ENCODE measurements at regions of chr3 and their contacts with region 1.

Region 1: DNA sequence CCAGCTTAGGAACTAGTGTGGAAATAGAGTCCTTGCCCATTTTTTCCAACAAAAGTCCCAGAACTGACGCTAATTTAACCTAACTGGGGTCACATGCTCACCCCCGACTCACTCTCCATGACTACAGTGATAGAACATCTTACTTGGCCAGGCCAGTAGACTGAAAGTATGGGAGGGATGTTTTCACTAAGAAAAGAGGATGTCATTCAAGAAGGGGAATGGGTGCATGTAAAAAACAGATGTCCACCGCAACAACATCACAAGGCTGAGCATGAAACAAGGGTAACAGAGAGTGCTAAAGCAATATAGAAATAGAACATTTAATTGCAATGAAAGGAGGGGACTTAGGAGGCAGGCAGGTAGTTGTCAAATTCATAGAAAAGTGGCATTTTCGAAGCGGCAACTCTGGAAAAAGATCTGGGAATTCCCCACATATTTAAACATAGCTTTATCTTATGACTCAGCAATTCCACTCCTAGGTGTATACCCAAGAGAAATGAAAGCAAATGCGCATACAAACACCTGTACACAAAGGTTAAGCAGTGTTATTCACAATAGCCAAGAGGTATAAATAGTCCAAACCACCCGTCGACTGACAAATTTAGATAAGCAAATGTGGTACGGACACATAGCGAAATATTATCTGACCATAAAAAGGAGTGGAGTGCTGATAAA is 41.1 kb upstream of the UBE2E2 start:
- DNase-seq: peak; percentile 17
- H3K4me3 ChIP-seq: no peak overlapping the region
- H3K27ac ChIP-seq: no peak overlapping the region
- H3K4me1 ChIP-seq: peaks cover 8% of the 10 kb centered on the region
- H3K27me3 ChIP-seq: no peaks in the 10 kb centered on the region
- CTCF ChIP-seq: no peak

Region 2: DNA sequence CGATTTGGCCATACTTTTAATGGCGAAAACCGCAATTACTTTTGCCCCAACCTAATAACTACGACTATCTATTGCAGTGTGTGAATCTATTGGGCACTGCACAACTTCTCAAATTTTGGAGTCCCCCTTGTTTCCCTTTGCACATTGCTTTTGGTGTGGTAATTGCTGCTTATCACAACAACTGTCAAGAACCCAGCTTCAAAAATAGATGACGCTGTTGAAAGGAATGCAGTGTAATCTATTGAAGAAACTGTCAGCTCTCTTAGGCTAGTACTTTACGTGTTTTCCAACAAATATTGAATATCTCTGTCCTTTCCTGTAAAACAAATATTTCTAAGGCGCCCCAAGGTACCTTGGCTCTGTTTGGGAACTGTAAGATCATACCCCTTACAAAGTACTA is 181.7 kb before region 1 on chr3:
- CTCF ChIA-PET with region 1: no interaction called
- dilution Hi-C with region 1: no loop called
- in situ Hi-C with region 1: no loop called
- intact Hi-C with region 1: loop called (anchors 10 kb)
- DNase-seq: no peak
- H3K4me3 ChIP-seq: no peak overlapping the region
- H3K27ac ChIP-seq: no peak overlapping the region
- H3K4me1 ChIP-seq: no peaks in the 10 kb centered on the region
- H3K27me3 ChIP-seq: peaks cover 6% of the 10 kb centered on the region
- CTCF ChIP-seq: no peak

Region 3: DNA sequence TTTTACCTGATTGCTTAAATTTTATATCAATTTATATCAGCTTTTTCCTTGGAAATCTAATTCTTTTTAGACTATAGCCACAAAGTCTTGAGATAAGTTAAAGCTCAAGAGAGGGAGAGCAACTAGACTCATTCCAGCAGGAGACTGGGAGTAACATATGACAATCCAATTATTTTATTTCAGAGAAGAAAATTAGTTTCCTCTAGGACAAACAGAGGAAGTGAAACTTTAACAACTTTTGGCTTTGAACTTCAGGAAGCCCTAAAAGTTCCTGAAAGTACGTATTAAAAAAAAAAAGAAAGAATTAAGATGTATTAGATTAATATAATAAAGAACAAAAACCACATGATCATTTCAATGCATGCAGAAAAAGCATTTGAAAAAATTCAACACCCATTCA is 27.2 kb after region 1 on chr3:
- CTCF ChIA-PET with region 1: no interaction called
- dilution Hi-C with region 1: no loop called
- in situ Hi-C with region 1: no loop called
- intact Hi-C with region 1: no loop called
- DNase-seq: no peak
- H3K4me3 ChIP-seq: no peak overlapping the region
- H3K27ac ChIP-seq: no peak overlapping the region
- H3K4me1 ChIP-seq: no peaks in the 10 kb centered on the region
- H3K27me3 ChIP-seq: no peaks in the 10 kb centered on the region
- CTCF ChIP-seq: no peak

Region 4: DNA sequence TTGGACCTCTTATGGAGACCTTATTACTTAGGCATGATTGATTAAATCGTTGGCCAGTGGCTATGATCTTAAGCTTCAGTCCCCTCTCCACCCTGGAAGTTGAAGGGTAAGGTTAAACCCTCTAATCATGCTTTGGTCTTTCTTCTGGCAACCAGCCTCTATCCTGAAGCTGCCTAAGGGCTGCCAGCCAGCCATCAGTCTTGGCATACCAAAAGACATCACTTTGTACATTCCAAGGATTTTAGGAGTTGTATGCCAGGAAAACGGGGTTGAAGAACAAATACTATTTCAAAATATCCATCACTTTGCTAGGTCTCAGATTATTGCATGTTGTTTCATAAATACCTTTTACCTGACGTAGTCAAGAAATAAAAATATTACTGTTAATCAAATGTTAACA is 70.0 kb after region 1 on chr3:
- CTCF ChIA-PET with region 1: no interaction called
- dilution Hi-C with region 1: no loop called
- in situ Hi-C with region 1: no loop called
- intact Hi-C with region 1: no loop called
- DNase-seq: no peak
- H3K4me3 ChIP-seq: no peak overlapping the region
- H3K27ac ChIP-seq: no peak overlapping the region
- H3K4me1 ChIP-seq: no peaks in the 10 kb centered on the region
- H3K27me3 ChIP-seq: no peaks in the 10 kb centered on the region
- CTCF ChIP-seq: no peak